Activated B cell treated with CpG ODN at 0.5 μM for 24 hours (primary cell): ENCODE measurements at regions of chr7 and their contacts with region 1.

Region 1: DNA sequence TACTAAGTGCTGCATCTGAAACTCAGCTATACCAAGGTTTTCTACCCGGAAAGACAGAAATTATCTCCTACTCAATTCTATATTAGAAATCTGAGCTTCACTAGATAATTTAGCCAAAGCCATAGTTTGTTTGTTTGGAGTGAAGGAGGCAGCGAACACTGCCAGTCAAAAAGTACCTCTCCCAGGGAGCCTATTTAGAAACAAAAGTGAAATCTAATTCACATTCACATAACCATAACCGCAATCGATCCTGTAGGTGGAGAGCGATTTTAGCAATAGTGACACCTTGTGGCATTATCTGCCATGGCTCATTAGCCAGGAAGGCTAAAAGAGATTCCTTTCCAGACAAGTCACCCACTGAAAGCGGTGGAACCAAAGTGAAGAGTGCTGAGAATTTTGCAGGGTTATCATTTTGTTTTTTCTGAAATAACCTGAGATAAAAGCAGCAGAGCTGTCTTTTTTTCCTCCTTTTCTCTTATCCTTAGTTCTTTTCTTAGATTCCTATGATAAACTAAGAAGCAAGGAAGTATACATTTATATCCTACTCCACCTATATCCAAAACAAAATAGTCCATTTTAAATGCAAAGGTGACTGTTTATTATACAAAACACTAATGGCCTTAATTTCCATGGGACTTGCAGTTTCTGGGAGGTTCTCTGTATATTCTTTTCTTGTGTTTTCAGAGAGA is 83.7 kb upstream of the BET1 start:
- DNase-seq: no peak
- ATAC-seq: peak; percentile 92
- H3K4me3 Mint-ChIP-seq: peak overlapping the region; percentile 82
- H3K27ac Mint-ChIP-seq: peak overlapping the region; percentile 89
- H3K4me1 Mint-ChIP-seq: peaks cover 19% of the 10 kb centered on the region
- H3K27me3 Mint-ChIP-seq: no peaks in the 10 kb centered on the region
- CTCF ChIP-seq: no peak

Region 2: GRCh38 chr7:93461350-93461749 is 626.5 kb before region 1 on chr7:
- CTCF ChIA-PET with region 1: no interaction called
- POLR2A ChIA-PET with region 1: no interaction called
- intact Hi-C with region 1: loop called (anchors 5 kb)
- DNase-seq: no peak
- ATAC-seq: no peak
- H3K4me3 Mint-ChIP-seq: no peak overlapping the region
- H3K27ac Mint-ChIP-seq: no peak overlapping the region
- H3K4me1 Mint-ChIP-seq: no peaks in the 10 kb centered on the region
- H3K27me3 Mint-ChIP-seq: peaks cover 2% of the 10 kb centered on the region
- CTCF ChIP-seq: no peak

Region 3: GRCh38 chr7:93799750-93800357 is 288.0 kb before region 1 on chr7:
- CTCF ChIA-PET with region 1: interaction called, 3 read pairs
- POLR2A ChIA-PET with region 1: no interaction called
- intact Hi-C with region 1: loop called (anchors 1 kb)
- DNase-seq: no peak
- ATAC-seq: no peak
- H3K4me3 Mint-ChIP-seq: no peak overlapping the region
- H3K27ac Mint-ChIP-seq: no peak overlapping the region
- H3K4me1 Mint-ChIP-seq: no peaks in the 10 kb centered on the region
- H3K27me3 Mint-ChIP-seq: peaks cover 2% of the 10 kb centered on the region
- CTCF ChIP-seq: no peak

Region 4: DNA sequence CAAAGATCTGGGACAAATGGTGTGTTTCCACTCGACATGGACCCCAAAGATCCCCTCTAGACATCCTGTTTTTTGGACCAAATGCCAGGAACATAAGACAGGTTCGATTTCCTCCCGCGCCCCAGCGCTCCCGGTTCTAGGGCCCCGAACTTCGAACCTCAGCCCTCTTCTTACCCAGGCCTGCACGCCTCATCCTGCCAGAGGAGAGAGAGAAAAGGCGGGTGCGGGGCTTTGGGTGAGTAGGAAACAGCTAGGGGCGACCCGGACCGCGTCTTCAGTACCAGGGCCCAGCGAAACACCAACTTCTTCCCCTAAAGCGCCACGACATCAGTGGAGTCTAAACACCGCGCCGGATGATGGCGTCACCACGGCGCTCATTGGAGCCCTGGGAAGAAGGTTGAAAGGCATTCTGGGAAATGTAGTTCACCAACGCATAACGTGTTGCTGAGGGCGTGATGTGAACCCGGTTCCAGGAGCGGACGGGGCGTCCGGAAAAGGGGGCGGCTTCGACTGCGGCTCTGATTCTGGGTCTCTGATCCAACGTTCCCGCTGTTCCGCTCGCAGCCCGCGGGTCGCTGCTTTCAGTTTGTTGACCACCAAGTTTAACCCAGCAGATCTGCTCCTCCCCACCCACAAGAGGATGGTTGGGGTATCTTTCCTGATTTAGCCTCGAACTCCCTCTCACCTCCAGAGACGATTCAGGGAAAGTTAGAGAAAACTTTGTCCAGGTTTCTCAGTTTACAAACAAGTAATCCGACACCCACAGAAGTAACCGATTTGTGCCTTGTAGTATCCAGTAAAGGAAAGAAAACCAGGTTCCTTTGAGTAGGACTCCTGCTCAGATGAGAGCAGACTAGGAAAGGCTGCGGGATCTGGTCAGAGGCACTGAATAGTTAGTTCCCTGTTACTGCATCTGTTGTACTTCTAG is 83.5 kb before region 1 on chr7 and contains the start of gene BET1:
- CTCF ChIA-PET with region 1: interaction called, 9 read pairs
- POLR2A ChIA-PET with region 1: interaction called, 4 read pairs
- intact Hi-C with region 1: loop called (anchors 1 kb)
- DNase-seq: peak; percentile 89
- ATAC-seq: peak; percentile 96
- H3K4me3 Mint-ChIP-seq: peak within 1 kb of the TSS; percentile 100
- H3K27ac Mint-ChIP-seq: peak within 1 kb of the TSS; percentile 99
- H3K4me1 Mint-ChIP-seq: peaks cover 50% of the 10 kb centered on the region
- H3K27me3 Mint-ChIP-seq: peaks cover 4% of the 10 kb centered on the region
- CTCF ChIP-seq: no peak
- total RNA-seq, gene BET1: 23.0 and 23.7 TPM in 2 replicates

Region 5: GRCh38 chr7:94069162-94069739 is 18.6 kb before region 1 on chr7:
- CTCF ChIA-PET with region 1: interaction called, 9 read pairs
- POLR2A ChIA-PET with region 1: no interaction called
- intact Hi-C with region 1: loop called (anchors 2 kb)
- DNase-seq: no peak
- ATAC-seq: peak; percentile 83
- H3K4me3 Mint-ChIP-seq: peak overlapping the region; percentile 19
- H3K27ac Mint-ChIP-seq: peak overlapping the region; percentile 71
- H3K4me1 Mint-ChIP-seq: peaks cover 36% of the 10 kb centered on the region
- H3K27me3 Mint-ChIP-seq: no peaks in the 10 kb centered on the region
- CTCF ChIP-seq: no peak

Region 6: GRCh38 chr7:94127026-94127425 is 39.2 kb after region 1 on chr7:
- CTCF ChIA-PET with region 1: no interaction called
- POLR2A ChIA-PET with region 1: no interaction called
- intact Hi-C with region 1: no loop called
- DNase-seq: no peak
- ATAC-seq: no peak
- H3K4me3 Mint-ChIP-seq: no peak overlapping the region
- H3K27ac Mint-ChIP-seq: no peak overlapping the region
- H3K4me1 Mint-ChIP-seq: no peaks in the 10 kb centered on the region
- H3K27me3 Mint-ChIP-seq: peaks cover 22% of the 10 kb centered on the region
- CTCF ChIP-seq: no peak

Region 7: GRCh38 chr7:94183289-94183749 is 95.5 kb after region 1 on chr7:
- CTCF ChIA-PET with region 1: no interaction called
- POLR2A ChIA-PET with region 1: no interaction called
- intact Hi-C with region 1: no loop called
- DNase-seq: no peak
- ATAC-seq: no peak
- H3K4me3 Mint-ChIP-seq: no peak overlapping the region
- H3K27ac Mint-ChIP-seq: no peak overlapping the region
- H3K4me1 Mint-ChIP-seq: peaks cover 8% of the 10 kb centered on the region
- H3K27me3 Mint-ChIP-seq: no peaks in the 10 kb centered on the region
- CTCF ChIP-seq: no peak

Region 8: GRCh38 chr7:94276795-94277194 is 189.0 kb after region 1 on chr7:
- CTCF ChIA-PET with region 1: no interaction called
- POLR2A ChIA-PET with region 1: no interaction called
- intact Hi-C with region 1: loop called (anchors 2 kb)
- DNase-seq: no peak
- ATAC-seq: peak; percentile 64
- H3K4me3 Mint-ChIP-seq: no peak overlapping the region
- H3K27ac Mint-ChIP-seq: no peak overlapping the region
- H3K4me1 Mint-ChIP-seq: no peaks in the 10 kb centered on the region
- H3K27me3 Mint-ChIP-seq: peaks cover 10% of the 10 kb centered on the region
- CTCF ChIP-seq: no peak